Naive thymus-derived CD4-positive, alpha-beta T cell (primary cell): ENCODE measurements at regions of chr4 and their contacts with region 1.

Region 1: GRCh38 chr4:17576932-17577665 is at the start of gene LAP3:
- DNase-seq: peak; percentile 97 to 100 (median 99)
- ATAC-seq: peak; percentile 94
- H3K4me3 ChIP-seq: peak within 1 kb of the TSS; percentile 77
- H3K4me3 Mint-ChIP-seq: peak within 1 kb of the TSS; percentile 78 to 96 (median 92)
- H3K27ac ChIP-seq: peak within 1 kb of the TSS; percentile 96
- H3K27ac Mint-ChIP-seq: peak within 1 kb of the TSS; percentile 92 to 100 (median 97)
- H3K4me1 ChIP-seq: peaks cover 4 to 11% of the 10 kb centered on the region in 2 donors
- H3K4me1 Mint-ChIP-seq: peaks cover 20 to 47% (median 24%) of the 10 kb centered on the region in 7 donors
- H3K27me3 ChIP-seq: no peaks in the 10 kb centered on the region
- H3K27me3 Mint-ChIP-seq: peaks cover 0 to 2% (median 0%) of the 10 kb centered on the region in 5 donors
- total RNA-seq, gene LAP3: 25.2 to 142 (median 54.9) TPM

Region 2: DNA sequence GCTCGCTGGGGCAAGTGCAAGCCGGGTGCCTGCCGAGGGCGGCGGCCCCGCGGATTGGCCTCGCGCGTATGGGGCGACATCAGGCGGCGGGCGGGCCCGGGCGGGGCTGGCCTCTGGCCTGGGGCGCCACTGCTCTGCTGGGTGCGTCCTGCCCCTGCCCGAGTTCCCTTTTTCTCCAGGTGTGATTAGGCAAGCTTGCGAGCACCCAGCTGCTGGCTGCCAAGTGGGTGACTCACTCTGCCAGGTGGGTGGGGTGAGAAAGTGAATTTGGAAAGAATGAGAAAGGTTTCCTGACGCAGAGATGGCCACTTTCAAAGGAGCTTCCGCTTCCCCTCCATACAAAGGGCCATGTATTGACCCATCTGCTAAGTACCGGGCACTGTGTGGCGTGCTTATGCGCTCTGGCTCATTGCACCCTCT is 1671.1 kb before region 1 on chr4:
- CTCF ChIA-PET with region 1: no interaction called
- POLR2A ChIA-PET with region 1: no interaction called
- intact Hi-C with region 1: no loop called
- DNase-seq: peak in 1 of 9 donors; percentile 24
- ATAC-seq: peak; percentile 57
- H3K4me3 ChIP-seq: no peak overlapping the region
- H3K4me3 Mint-ChIP-seq: no peak overlapping the region
- H3K27ac ChIP-seq: no peak overlapping the region
- H3K27ac Mint-ChIP-seq: no peak overlapping the region
- H3K4me1 ChIP-seq: no peaks in the 10 kb centered on the region
- H3K4me1 Mint-ChIP-seq: peaks cover 0 to 10% (median 0%) of the 10 kb centered on the region in 7 donors
- H3K27me3 ChIP-seq: no peaks in the 10 kb centered on the region
- H3K27me3 Mint-ChIP-seq: peaks cover 23 to 34% (median 28%) of the 10 kb centered on the region in 5 donors

Region 3: GRCh38 chr4:17511950-17512795 is 64.9 kb before region 1 on chr4 and contains the start of gene QDPR:
- CTCF ChIA-PET with region 1: interaction called, 3 read pairs
- POLR2A ChIA-PET with region 1: no interaction called
- intact Hi-C with region 1: loop called (anchors 1 kb)
- DNase-seq: peak; percentile 55 to 81 (median 70)
- ATAC-seq: peak; percentile 95
- H3K4me3 ChIP-seq: peak within 1 kb of the TSS; percentile 94
- H3K4me3 Mint-ChIP-seq: peak within 1 kb of the TSS; percentile 86 to 100 (median 96)
- H3K27ac ChIP-seq: peak within 1 kb of the TSS; percentile 69
- H3K27ac Mint-ChIP-seq: peak within 1 kb of the TSS; percentile 83 to 96 (median 85)
- H3K4me1 ChIP-seq: peaks cover 9 to 10% of the 10 kb centered on the region in 2 donors
- H3K4me1 Mint-ChIP-seq: peaks cover 18 to 42% (median 34%) of the 10 kb centered on the region in 7 donors
- H3K27me3 ChIP-seq: no peaks in the 10 kb centered on the region
- H3K27me3 Mint-ChIP-seq: peaks cover 0 to 18% (median 6%) of the 10 kb centered on the region in 5 donors
- total RNA-seq, gene QDPR: 11.8 to 27.7 (median 23.1) TPM

Region 4: DNA sequence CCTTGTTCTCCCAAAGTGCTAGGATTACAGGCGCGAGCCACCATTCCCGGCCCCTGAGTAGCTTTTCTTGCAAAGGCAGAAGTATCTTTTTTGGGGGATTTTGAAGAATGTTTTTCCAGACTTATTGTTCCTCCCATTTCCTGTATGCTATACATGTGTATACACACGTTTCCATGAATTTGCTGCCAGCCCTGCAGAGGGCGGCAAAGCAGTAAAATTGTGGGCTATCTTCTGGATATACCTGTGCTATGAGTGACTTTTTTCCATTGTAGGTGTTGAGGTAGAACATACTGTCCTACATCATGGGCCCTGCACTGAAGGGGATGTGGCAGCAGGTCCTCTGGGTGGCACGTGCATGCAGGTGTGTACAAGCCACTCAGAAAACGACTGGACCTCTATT is 20.4 kb after region 1 on chr4:
- CTCF ChIA-PET with region 1: no interaction called
- POLR2A ChIA-PET with region 1: no interaction called
- intact Hi-C with region 1: loop called in 1 of 2 experiments (anchors 2 kb)
- DNase-seq: no peak
- ATAC-seq: no peak
- H3K4me3 ChIP-seq: no peak overlapping the region
- H3K4me3 Mint-ChIP-seq: no peak overlapping the region
- H3K27ac ChIP-seq: no peak overlapping the region
- H3K27ac Mint-ChIP-seq: peak overlapping the region in 1 of 9 donors; percentile 19
- H3K4me1 ChIP-seq: no peaks in the 10 kb centered on the region
- H3K4me1 Mint-ChIP-seq: peaks cover 0 to 12% (median 0%) of the 10 kb centered on the region in 7 donors
- H3K27me3 ChIP-seq: no peaks in the 10 kb centered on the region
- H3K27me3 Mint-ChIP-seq: no peaks in the 10 kb centered on the region

Region 5: GRCh38 chr4:17636696-17637622 is 59.9 kb after region 1 on chr4:
- CTCF ChIA-PET with region 1: no interaction called
- POLR2A ChIA-PET with region 1: no interaction called
- intact Hi-C with region 1: loop called (anchors 1 to 2 kb)
- DNase-seq: peak; percentile 33 to 71 (median 55)
- ATAC-seq: peak; percentile 89
- H3K4me3 ChIP-seq: no peak overlapping the region
- H3K4me3 Mint-ChIP-seq: no peak overlapping the region
- H3K27ac ChIP-seq: peak overlapping the region; percentile 27
- H3K27ac Mint-ChIP-seq: peak overlapping the region in 5 of 9 donors; percentile 32 to 65 (median 48)
- H3K4me1 ChIP-seq: no peaks in the 10 kb centered on the region
- H3K4me1 Mint-ChIP-seq: peaks cover 0 to 3% (median 0%) of the 10 kb centered on the region in 7 donors
- H3K27me3 ChIP-seq: no peaks in the 10 kb centered on the region
- H3K27me3 Mint-ChIP-seq: no peaks in the 10 kb centered on the region

Region 6: GRCh38 chr4:17762726-17763125 is 185.6 kb after region 1 on chr4:
- CTCF ChIA-PET with region 1: no interaction called
- POLR2A ChIA-PET with region 1: no interaction called
- intact Hi-C with region 1: no loop called
- DNase-seq: no peak
- ATAC-seq: no peak
- H3K4me3 ChIP-seq: no peak overlapping the region
- H3K4me3 Mint-ChIP-seq: no peak overlapping the region
- H3K27ac ChIP-seq: no peak overlapping the region
- H3K27ac Mint-ChIP-seq: no peak overlapping the region
- H3K4me1 ChIP-seq: no peaks in the 10 kb centered on the region
- H3K4me1 Mint-ChIP-seq: peaks cover 0 to 9% (median 7%) of the 10 kb centered on the region in 7 donors
- H3K27me3 ChIP-seq: no peaks in the 10 kb centered on the region
- H3K27me3 Mint-ChIP-seq: peaks cover 0 to 11% (median 3%) of the 10 kb centered on the region in 5 donors

Region 7: GRCh38 chr4:18105030-18106011 is 528.2 kb after region 1 on chr4:
- CTCF ChIA-PET with region 1: no interaction called
- POLR2A ChIA-PET with region 1: no interaction called
- intact Hi-C with region 1: no loop called
- DNase-seq: no peak
- ATAC-seq: no peak
- H3K4me3 ChIP-seq: no peak overlapping the region
- H3K4me3 Mint-ChIP-seq: no peak overlapping the region
- H3K27ac ChIP-seq: no peak overlapping the region
- H3K27ac Mint-ChIP-seq: no peak overlapping the region
- H3K4me1 ChIP-seq: no peaks in the 10 kb centered on the region
- H3K4me1 Mint-ChIP-seq: no peaks in the 10 kb centered on the region
- H3K27me3 ChIP-seq: no peaks in the 10 kb centered on the region
- H3K27me3 Mint-ChIP-seq: peaks cover 3 to 18% (median 12%) of the 10 kb centered on the region in 5 donors